Naive thymus-derived CD4-positive, alpha-beta T cell (primary cell): ENCODE measurements at regions of chr9 and their contacts with region 1.

Region 1: DNA sequence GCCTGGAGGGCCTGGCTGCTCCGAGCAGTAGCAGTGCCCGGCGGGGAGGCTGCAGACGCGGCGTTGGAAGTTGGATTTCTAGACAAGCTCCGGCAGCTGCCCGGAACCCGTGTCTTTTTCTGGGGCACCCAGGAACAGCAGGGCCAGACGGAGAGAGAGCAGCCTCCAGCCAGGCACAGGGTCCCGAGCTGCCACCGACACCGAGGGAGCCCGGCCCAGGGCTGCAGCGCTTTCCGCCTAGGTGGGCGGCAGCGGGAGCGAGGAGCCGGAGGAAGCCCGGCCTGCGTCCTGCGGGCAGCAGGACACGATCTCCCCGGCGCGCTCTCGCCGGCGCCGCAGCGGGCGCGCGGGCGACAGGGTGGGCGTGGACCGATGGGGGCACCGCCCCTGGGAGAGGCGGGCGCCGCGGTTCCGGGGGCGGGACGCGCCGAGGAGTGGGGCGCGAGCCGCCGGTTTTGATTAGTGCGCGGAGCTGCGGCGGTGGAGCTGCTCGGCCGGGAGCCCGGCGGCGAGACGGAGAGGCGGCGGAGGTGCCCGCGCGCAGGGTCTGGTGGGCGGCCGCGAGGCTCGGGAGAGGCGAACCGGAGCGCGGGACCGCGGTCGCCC is at the start of gene UGCG:
- DNase-seq: peak; percentile 80 to 95 (median 92)
- ATAC-seq: peak; percentile 97
- H3K4me3 ChIP-seq: peak within 1 kb of the TSS; percentile 87
- H3K4me3 Mint-ChIP-seq: peak within 1 kb of the TSS in 7 of 10 donors; percentile 91 to 96 (median 95)
- H3K27ac ChIP-seq: peak within 1 kb of the TSS; percentile 80
- H3K27ac Mint-ChIP-seq: peak within 1 kb of the TSS; percentile 88 to 95 (median 94)
- H3K4me1 ChIP-seq: peaks cover 17 to 40% of the 10 kb centered on the region in 2 donors
- H3K4me1 Mint-ChIP-seq: peaks cover 7 to 32% (median 29%) of the 10 kb centered on the region in 7 donors
- H3K27me3 ChIP-seq: no peaks in the 10 kb centered on the region
- H3K27me3 Mint-ChIP-seq: no peaks in the 10 kb centered on the region
- total RNA-seq, gene UGCG: 21.1 to 40.9 (median 24.5) TPM

Region 2: GRCh38 chr9:111588846-111589245 is 307.6 kb before region 1 on chr9:
- CTCF ChIA-PET with region 1: no interaction called
- POLR2A ChIA-PET with region 1: no interaction called
- intact Hi-C with region 1: no loop called
- DNase-seq: no peak
- ATAC-seq: no peak
- H3K4me3 ChIP-seq: no peak overlapping the region
- H3K4me3 Mint-ChIP-seq: no peak overlapping the region
- H3K27ac ChIP-seq: no peak overlapping the region
- H3K27ac Mint-ChIP-seq: no peak overlapping the region
- H3K4me1 ChIP-seq: no peaks in the 10 kb centered on the region
- H3K4me1 Mint-ChIP-seq: no peaks in the 10 kb centered on the region
- H3K27me3 ChIP-seq: no peaks in the 10 kb centered on the region
- H3K27me3 Mint-ChIP-seq: peaks cover 0 to 9% (median 0%) of the 10 kb centered on the region in 5 donors

Region 3: DNA sequence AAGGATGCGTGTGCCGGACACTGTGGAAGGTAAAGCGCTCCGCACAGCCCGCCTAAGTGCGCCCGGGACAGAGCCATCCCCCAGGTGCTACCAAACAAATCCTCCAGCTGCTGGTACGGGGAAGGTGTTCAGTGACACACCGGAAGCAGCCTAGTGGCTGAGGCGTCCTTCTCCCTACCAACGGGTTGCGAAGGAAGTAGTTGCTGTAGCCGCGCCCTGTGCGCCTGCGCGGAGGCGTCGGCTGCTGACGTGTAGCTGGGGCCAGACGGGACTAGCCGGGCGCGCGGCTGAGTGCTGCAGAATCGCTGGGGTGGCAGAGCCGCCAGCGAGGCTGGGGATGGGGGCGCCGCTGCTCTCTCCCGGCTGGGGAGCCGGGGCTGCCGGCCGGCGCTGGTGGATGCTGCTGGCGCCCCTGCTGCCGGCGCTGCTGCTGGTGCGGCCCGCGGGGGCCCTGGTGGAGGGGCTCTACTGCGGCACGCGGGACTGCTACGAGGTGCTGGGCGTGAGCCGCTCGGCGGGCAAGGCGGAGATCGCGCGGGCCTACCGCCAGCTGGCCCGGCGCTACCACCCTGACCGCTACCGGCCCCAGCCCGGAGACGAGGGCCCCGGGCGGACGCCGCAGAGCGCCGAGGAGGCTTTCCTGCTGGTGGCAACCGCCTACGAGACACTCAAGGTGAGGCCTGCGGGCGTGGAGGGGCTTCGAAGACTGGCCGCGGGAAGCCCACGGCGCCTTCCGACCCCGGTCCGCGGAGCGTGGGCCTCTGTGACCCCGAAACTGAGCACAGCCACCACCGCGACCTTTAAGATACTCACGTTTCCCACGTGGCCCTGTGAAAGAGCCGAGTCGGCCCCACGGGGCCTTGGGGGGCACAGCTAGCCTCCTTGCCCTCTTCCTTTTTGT is 265.1 kb before region 1 on chr9 and contains the start of gene DNAJC25:
- CTCF ChIA-PET with region 1: no interaction called
- POLR2A ChIA-PET with region 1: no interaction called
- intact Hi-C with region 1: loop called (anchors 1 kb)
- DNase-seq: peak; percentile 94 to 98 (median 97)
- ATAC-seq: peak; percentile 97
- H3K4me3 ChIP-seq: peak within 1 kb of the TSS; percentile 82
- H3K4me3 Mint-ChIP-seq: peak within 1 kb of the TSS; percentile 81 to 99 (median 94)
- H3K27ac ChIP-seq: peak within 1 kb of the TSS; percentile 83
- H3K27ac Mint-ChIP-seq: peak within 1 kb of the TSS; percentile 78 to 95 (median 89)
- H3K4me1 ChIP-seq: peaks cover 14 to 21% of the 10 kb centered on the region in 2 donors
- H3K4me1 Mint-ChIP-seq: peaks cover 29 to 57% (median 47%) of the 10 kb centered on the region in 7 donors
- H3K27me3 ChIP-seq: no peaks in the 10 kb centered on the region
- H3K27me3 Mint-ChIP-seq: no peaks in the 10 kb centered on the region
- total RNA-seq, gene DNAJC25: 4.0 to 6.0 (median 5.2) TPM

Region 4: DNA sequence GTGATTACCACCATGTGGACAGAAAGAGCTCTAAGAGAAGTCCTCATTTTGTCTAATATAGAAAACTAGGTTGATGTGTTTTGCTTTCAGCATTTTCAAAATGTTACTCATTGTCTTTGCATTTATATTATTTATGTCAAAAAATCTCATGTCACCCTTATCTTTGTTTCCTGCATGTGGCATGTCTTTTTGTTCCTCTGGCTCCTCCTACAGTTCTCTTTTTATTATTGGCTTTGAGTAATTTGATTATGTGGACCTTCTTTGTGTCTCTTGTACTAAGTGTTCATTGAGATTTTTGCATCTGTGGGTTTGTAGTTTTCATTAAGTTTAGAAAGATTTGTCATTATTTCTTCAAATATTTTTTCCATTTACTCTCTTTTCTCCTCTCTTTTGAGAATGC is 176.3 kb before region 1 on chr9:
- CTCF ChIA-PET with region 1: no interaction called
- POLR2A ChIA-PET with region 1: no interaction called
- intact Hi-C with region 1: no loop called
- DNase-seq: no peak
- ATAC-seq: no peak
- H3K4me3 ChIP-seq: no peak overlapping the region
- H3K4me3 Mint-ChIP-seq: no peak overlapping the region
- H3K27ac ChIP-seq: no peak overlapping the region
- H3K27ac Mint-ChIP-seq: no peak overlapping the region
- H3K4me1 ChIP-seq: no peaks in the 10 kb centered on the region
- H3K4me1 Mint-ChIP-seq: peaks cover 0 to 1% (median 0%) of the 10 kb centered on the region in 7 donors
- H3K27me3 ChIP-seq: no peaks in the 10 kb centered on the region
- H3K27me3 Mint-ChIP-seq: no peaks in the 10 kb centered on the region

Region 5: GRCh38 chr9:111909441-111909840 is 13.0 kb after region 1 on chr9:
- CTCF ChIA-PET with region 1: interaction called, 3 read pairs
- POLR2A ChIA-PET with region 1: interaction called, 18 read pairs
- intact Hi-C with region 1: loop called in 1 of 2 experiments (anchors 1 kb)
- DNase-seq: no peak
- ATAC-seq: peak; percentile 47
- H3K4me3 ChIP-seq: no peak overlapping the region
- H3K4me3 Mint-ChIP-seq: peak overlapping the region in 9 of 10 donors; percentile 5 to 77 (median 49)
- H3K27ac ChIP-seq: no peak overlapping the region
- H3K27ac Mint-ChIP-seq: peak overlapping the region in 7 of 9 donors; percentile 16 to 77 (median 40)
- H3K4me1 ChIP-seq: peaks cover 42 to 57% of the 10 kb centered on the region in 2 donors
- H3K4me1 Mint-ChIP-seq: peaks cover 69 to 100% (median 95%) of the 10 kb centered on the region in 7 donors
- H3K27me3 ChIP-seq: no peaks in the 10 kb centered on the region
- H3K27me3 Mint-ChIP-seq: no peaks in the 10 kb centered on the region

Region 6: DNA sequence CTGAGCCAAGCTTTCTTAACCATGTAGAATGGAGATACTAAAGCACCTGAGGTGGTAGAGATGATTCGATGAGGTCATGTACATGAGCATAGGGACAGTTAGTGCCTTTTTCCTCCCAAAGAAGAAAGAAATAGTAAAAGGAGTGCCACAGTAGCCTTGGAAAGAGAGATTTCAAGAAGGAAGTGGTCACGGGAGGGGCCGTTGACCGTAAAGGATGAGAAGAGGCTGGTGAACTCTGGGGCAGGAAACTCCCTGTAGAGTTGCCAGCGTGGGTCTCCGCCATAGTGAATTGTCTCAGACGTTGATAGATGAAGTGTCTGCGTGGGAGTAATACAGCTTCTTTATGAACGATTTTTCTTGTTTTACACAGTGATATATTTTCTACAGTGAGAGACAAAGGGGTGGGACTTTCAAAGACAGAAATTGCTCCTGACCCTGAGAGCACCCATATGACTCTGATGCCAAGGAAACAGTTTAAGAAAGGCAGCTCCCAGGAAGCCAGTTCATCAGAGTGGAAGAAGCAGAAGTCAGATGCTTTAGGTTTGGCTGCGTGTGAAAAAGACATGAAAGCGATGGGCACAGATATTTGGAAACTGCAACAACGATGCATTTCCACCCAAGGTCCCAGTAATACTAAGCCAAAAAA is 41.4 kb after region 1 on chr9:
- CTCF ChIA-PET with region 1: no interaction called
- POLR2A ChIA-PET with region 1: interaction called, 10 read pairs
- intact Hi-C with region 1: loop called in 1 of 2 experiments (anchors 1 kb)
- DNase-seq: peak; percentile 12 to 71 (median 53)
- ATAC-seq: peak; percentile 96
- H3K4me3 ChIP-seq: peak overlapping the region; percentile 29
- H3K4me3 Mint-ChIP-seq: peak overlapping the region; percentile 52 to 82 (median 76)
- H3K27ac ChIP-seq: peak overlapping the region; percentile 19
- H3K27ac Mint-ChIP-seq: peak overlapping the region; percentile 83 to 93 (median 90)
- H3K4me1 ChIP-seq: peaks cover 15 to 19% of the 10 kb centered on the region in 2 donors
- H3K4me1 Mint-ChIP-seq: peaks cover 20 to 43% (median 33%) of the 10 kb centered on the region in 7 donors
- H3K27me3 ChIP-seq: no peaks in the 10 kb centered on the region
- H3K27me3 Mint-ChIP-seq: no peaks in the 10 kb centered on the region

Region 7: DNA sequence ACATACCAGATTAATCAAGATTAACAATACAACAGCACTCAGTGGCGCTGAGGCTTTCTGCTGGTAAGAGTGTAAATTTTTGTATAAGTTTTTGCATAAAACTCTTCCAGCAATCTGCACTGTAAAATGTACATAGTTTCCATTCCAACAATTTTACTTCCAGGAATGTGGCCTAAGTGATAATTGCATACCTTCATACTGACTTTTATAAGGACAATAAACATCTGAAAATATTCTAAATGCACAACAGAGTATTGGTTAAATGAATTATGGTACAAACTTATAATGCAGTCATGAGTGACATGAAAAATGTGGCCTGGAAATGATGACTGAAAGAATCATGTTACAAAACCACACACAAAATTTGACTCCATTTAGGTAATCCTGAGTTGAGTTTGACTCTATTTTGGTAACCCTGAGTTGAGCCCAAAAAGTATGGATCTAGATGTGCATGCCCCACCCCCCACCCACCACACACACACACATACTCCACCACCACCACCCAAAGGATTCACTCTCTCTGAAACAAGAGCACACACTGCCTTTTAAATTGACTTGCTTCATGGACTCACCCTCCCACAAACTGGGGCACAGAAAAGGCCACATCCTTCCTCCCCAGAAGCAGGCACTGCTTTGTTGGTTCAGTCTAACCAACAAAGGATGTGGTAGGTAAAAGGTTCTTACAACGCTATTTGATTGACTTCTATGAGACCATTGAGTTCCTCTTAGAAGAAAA is 141.0 kb after region 1 on chr9:
- CTCF ChIA-PET with region 1: no interaction called
- POLR2A ChIA-PET with region 1: interaction called, 7 read pairs
- intact Hi-C with region 1: loop called (anchors 1 kb)
- DNase-seq: peak in 8 of 9 donors; percentile 70 to 92 (median 86)
- ATAC-seq: peak; percentile 98
- H3K4me3 ChIP-seq: no peak overlapping the region
- H3K4me3 Mint-ChIP-seq: peak overlapping the region; percentile 57 to 84 (median 70)
- H3K27ac ChIP-seq: no peak overlapping the region
- H3K27ac Mint-ChIP-seq: peak overlapping the region; percentile 12 to 83 (median 42)
- H3K4me1 ChIP-seq: peaks cover 21 to 27% of the 10 kb centered on the region in 2 donors
- H3K4me1 Mint-ChIP-seq: peaks cover 29 to 71% (median 63%) of the 10 kb centered on the region in 7 donors
- H3K27me3 ChIP-seq: no peaks in the 10 kb centered on the region
- H3K27me3 Mint-ChIP-seq: peaks cover 0 to 18% (median 6%) of the 10 kb centered on the region in 5 donors

Region 8: DNA sequence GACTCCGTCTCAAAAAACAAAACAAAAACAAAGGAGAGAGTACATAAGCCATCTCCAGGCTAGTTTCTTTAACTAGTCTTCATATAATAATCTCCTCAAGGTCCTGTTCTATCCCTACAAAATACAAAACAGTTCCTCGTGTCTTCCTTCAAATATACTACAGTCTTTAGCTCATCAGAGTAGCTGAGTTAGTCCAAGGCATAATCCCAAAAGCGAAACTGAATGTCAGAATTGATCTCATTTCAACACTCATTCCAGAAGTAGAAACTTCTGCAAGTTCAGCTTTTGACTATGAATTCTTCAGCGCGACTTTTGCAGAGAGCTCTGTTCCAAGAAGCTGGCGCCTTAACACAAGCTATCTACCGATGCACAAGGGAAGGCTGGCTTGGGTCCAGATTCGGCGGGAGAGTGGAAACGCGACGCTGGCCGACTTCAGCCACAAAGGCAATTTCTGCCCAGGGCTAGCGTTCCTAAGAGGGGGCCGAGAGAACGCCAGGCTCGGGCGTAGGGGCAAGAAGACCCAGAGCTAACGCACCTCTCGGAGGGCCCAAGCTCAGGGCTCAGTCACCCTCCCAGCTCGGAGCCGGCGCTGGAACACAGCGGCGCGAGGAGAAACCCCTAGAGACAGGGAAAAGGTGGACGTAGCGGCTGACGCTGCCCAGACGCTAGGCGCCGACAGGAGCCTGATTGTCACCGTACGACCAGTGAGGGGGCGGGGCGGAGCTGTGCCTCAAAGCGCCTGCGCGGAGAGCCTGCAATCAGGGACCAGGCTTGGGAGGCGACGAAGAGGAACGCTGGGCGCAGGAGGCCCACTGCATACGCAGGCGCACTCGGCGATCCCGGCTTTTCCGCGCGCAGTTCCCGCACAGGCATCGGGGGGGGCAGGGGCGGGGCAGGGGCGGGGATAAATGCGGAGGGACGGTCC is 483.0 kb after region 1 on chr9:
- CTCF ChIA-PET with region 1: no interaction called
- POLR2A ChIA-PET with region 1: interaction called, 6 read pairs
- intact Hi-C with region 1: loop called (anchors 1 to 2 kb)
- DNase-seq: peak; percentile 89 to 97 (median 93)
- ATAC-seq: peak; percentile 98
- H3K4me3 ChIP-seq: peak overlapping the region; percentile 78
- H3K4me3 Mint-ChIP-seq: peak overlapping the region; percentile 86 to 100 (median 99)
- H3K27ac ChIP-seq: peak overlapping the region; percentile 85
- H3K27ac Mint-ChIP-seq: peak overlapping the region; percentile 84 to 99 (median 97)
- H3K4me1 ChIP-seq: peaks cover 14 to 17% of the 10 kb centered on the region in 2 donors
- H3K4me1 Mint-ChIP-seq: peaks cover 24 to 61% (median 53%) of the 10 kb centered on the region in 7 donors
- H3K27me3 ChIP-seq: no peaks in the 10 kb centered on the region
- H3K27me3 Mint-ChIP-seq: no peaks in the 10 kb centered on the region

Region 9: GRCh38 chr9:112680731-112681402 is 784.4 kb after region 1 on chr9:
- CTCF ChIA-PET with region 1: no interaction called
- POLR2A ChIA-PET with region 1: no interaction called
- intact Hi-C with region 1: no loop called
- DNase-seq: no peak
- ATAC-seq: no peak
- H3K4me3 ChIP-seq: no peak overlapping the region
- H3K4me3 Mint-ChIP-seq: no peak overlapping the region
- H3K27ac ChIP-seq: no peak overlapping the region
- H3K27ac Mint-ChIP-seq: peak overlapping the region in 1 of 9 donors; percentile 12
- H3K4me1 ChIP-seq: no peaks in the 10 kb centered on the region
- H3K4me1 Mint-ChIP-seq: peaks cover 4 to 19% (median 9%) of the 10 kb centered on the region in 7 donors
- H3K27me3 ChIP-seq: no peaks in the 10 kb centered on the region
- H3K27me3 Mint-ChIP-seq: peaks cover 0 to 7% (median 0%) of the 10 kb centered on the region in 5 donors

Region 10: DNA sequence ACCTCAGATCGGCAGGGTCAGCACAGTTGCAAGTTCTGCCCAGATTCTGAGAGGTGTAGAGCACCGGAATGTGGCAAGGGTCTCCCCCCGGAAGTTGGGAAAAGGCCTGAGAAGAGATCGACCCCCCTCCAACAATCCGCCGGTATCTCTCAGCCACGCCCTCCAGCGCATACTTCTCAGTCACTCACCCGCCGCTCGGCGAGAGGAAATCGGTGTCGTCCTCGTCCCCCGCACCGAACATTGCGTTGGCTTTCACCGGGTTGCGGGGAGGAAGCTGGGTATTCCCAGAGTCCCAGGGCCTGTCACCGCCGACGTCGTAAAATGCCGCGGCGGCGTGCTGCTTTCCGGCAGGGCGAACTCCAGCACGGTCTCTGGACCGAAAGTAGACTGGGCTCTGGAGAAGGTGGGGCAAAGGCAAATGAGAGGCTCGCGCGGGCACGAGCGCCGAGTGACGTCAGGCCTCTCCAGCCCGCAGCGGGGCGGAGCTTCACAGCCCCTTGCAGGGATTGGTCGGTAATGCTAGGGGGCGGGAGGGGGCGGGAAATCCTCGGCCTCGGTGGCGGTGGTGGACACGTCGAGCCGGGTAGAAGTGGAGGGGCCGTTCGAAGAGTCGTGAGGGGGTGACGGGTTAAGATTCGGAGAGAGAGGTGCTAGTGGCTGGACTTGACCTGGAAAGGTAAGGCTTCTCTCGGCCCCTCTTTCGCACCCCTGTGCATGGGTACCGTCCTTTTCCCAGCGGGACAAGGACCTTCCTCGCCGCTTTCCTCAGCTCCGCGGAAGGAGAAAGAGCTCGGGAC is 1324.7 kb after region 1 on chr9 and contains the starts of genes FKBP15 and SLC31A1:
- CTCF ChIA-PET with region 1: no interaction called
- POLR2A ChIA-PET with region 1: no interaction called
- intact Hi-C with region 1: loop called (anchors 2 kb)
- DNase-seq: peak; percentile 88 to 96 (median 96)
- ATAC-seq: peak; percentile 99
- H3K4me3 ChIP-seq: peak within 1 kb of the TSS; percentile 91
- H3K4me3 Mint-ChIP-seq: peak within 1 kb of the TSS; percentile 89 to 99 (median 94)
- H3K27ac ChIP-seq: peak within 1 kb of the TSS; percentile 94
- H3K27ac Mint-ChIP-seq: peak within 1 kb of the TSS; percentile 86 to 98 (median 94)
- H3K4me1 ChIP-seq: peaks cover 10 to 25% of the 10 kb centered on the region in 2 donors
- H3K4me1 Mint-ChIP-seq: peaks cover 15 to 58% (median 48%) of the 10 kb centered on the region in 7 donors
- H3K27me3 ChIP-seq: no peaks in the 10 kb centered on the region
- H3K27me3 Mint-ChIP-seq: no peaks in the 10 kb centered on the region
- total RNA-seq, gene FKBP15: 22.4 to 50.6 (median 33.4) TPM
- total RNA-seq, gene SLC31A1: 4.5 to 10.4 (median 4.7) TPM